ENCODE measurements at regions of chr5 and their contacts with region 1.

Region 1: GRCh38 chr5:43401827-43402226 is 10.4 kb downstream of the CCL28 start:
- DNase-seq: no peak
- H3K4me3 ChIP-seq: no peak overlapping the region
- H3K27ac ChIP-seq: no peak overlapping the region
- H3K4me1 ChIP-seq: peaks cover 3% of the 10 kb centered on the region
- H3K27me3 ChIP-seq: no peaks in the 10 kb centered on the region
- CTCF ChIP-seq: no peak
- EP300 ChIP-seq: no peak
- POLR2A ChIP-seq: no peak

Region 2: DNA sequence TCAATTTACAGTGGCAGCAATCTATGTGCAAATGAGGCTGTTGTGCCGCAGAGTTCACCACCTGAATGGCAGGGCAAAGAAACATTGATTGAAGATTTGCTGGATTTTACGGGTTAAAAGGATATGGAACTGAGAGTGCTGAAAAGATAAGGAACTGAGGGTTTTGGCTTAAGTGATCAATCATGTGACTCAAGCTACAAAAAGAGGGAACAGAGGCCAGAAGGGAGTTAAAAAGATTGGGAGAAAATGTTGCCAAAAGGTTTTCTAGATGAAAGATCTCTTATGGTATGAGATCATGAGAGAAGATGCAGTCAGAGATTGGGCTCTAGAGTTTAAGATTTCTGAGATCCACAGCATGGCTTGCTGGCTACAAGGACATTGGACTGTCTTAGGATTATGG is 1505.6 kb before region 1 on chr5:
- intact Hi-C with region 1: loop called in 1 of 4 experiments (anchors 5 kb)
- DNase-seq: no peak
- H3K4me3 ChIP-seq: no peak overlapping the region
- H3K27ac ChIP-seq: no peak overlapping the region
- H3K4me1 ChIP-seq: no peaks in the 10 kb centered on the region
- H3K27me3 ChIP-seq: no peaks in the 10 kb centered on the region
- CTCF ChIP-seq: no peak
- EP300 ChIP-seq: no peak
- POLR2A ChIP-seq: no peak

Region 3: DNA sequence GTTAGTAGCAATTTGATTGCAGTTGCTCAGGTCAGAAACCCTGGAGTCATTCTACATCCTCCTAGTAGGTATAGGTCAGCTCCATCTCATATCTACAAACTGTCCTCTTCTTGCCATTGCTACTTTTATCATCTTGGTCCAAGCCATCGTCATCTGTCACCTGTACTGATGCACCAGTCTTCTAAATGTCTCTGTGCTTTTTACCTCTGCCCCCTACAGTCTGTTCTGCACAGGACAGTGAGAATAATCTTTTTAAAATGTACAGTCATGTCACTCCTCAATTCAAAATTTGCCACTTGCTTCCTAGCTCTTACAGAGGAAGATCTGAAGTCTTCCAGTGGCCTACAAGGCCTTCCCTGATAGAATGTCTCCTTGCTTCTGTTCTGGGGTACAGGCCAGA is 207.9 kb after region 1 on chr5:
- intact Hi-C with region 1: no loop called
- DNase-seq: no peak
- H3K4me3 ChIP-seq: no peak overlapping the region
- H3K27ac ChIP-seq: no peak overlapping the region
- H3K4me1 ChIP-seq: no peaks in the 10 kb centered on the region
- H3K27me3 ChIP-seq: no peaks in the 10 kb centered on the region
- CTCF ChIP-seq: no peak
- EP300 ChIP-seq: no peak
- POLR2A ChIP-seq: no peak

Region 4: DNA sequence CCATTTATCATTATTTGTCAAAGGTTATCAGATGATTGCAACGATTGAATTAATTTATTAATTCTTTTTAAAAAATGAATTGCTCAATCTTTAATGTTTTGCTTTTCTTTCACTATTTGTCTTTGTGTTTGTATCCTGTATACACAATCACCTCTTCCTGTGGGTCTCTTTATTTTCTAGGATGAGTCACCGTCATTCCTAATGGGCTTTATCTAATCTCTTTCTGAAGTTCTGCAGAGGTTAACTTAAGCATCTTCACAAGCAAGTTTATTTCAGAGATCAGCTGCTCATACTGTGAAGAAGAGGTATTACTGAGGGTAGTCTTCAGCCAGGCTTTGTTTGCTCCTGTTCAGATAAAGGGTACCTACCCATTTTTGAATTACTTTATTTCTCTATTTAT is 525.1 kb after region 1 on chr5:
- intact Hi-C with region 1: no loop called
- DNase-seq: no peak
- H3K4me3 ChIP-seq: no peak overlapping the region
- H3K27ac ChIP-seq: no peak overlapping the region
- H3K4me1 ChIP-seq: no peaks in the 10 kb centered on the region
- H3K27me3 ChIP-seq: no peaks in the 10 kb centered on the region
- CTCF ChIP-seq: no peak
- EP300 ChIP-seq: no peak
- POLR2A ChIP-seq: no peak

Measured in ovary (tissue), 10 donors.